CD14-positive monocyte (primary cell): ENCODE measurements at regions of chr20 and their contacts with region 1.

Region 1: GRCh38 chr20:8427419-8428040 is 295.5 kb downstream of the PLCB1 start:
- DNase-seq: peak; percentile 57 to 86 (median 77)
- H3K4me3 ChIP-seq: peak overlapping the region in 1 of 3 experiments; percentile 33
- H3K4me3 Mint-ChIP-seq: peak overlapping the region; percentile 27 to 68
- H3K27ac ChIP-seq: peak overlapping the region; percentile 74 to 83
- H3K27ac Mint-ChIP-seq: peak overlapping the region; percentile 91 to 96 (median 95)
- H3K4me1 ChIP-seq: peaks cover 76 to 88% of the 10 kb centered on the region in 2 donors
- H3K4me1 Mint-ChIP-seq: peaks cover 81% of the 10 kb centered on the region
- H3K27me3 ChIP-seq: no peaks in the 10 kb centered on the region
- H3K27me3 Mint-ChIP-seq: no peaks in the 10 kb centered on the region
- CTCF ChIP-seq: no peak

Region 2: GRCh38 chr20:8244637-8245036 is 182.9 kb before region 1 on chr20:
- intact Hi-C with region 1: no loop called
- DNase-seq: no peak
- H3K4me3 ChIP-seq: no peak overlapping the region
- H3K4me3 Mint-ChIP-seq: no peak overlapping the region
- H3K27ac ChIP-seq: no peak overlapping the region
- H3K27ac Mint-ChIP-seq: no peak overlapping the region
- H3K4me1 ChIP-seq: peaks cover 5 to 23% of the 10 kb centered on the region in 2 donors
- H3K4me1 Mint-ChIP-seq: peaks cover 30% of the 10 kb centered on the region
- H3K27me3 ChIP-seq: no peaks in the 10 kb centered on the region
- H3K27me3 Mint-ChIP-seq: no peaks in the 10 kb centered on the region
- CTCF ChIP-seq: no peak

Region 3: GRCh38 chr20:8389381-8390036 is 38.0 kb before region 1 on chr20:
- intact Hi-C with region 1: loop called in 1 of 2 experiments (anchors 5 kb)
- DNase-seq: peak; percentile 28 to 64 (median 53)
- H3K4me3 ChIP-seq: peak overlapping the region in 1 of 3 experiments; percentile 16
- H3K4me3 Mint-ChIP-seq: no peak overlapping the region
- H3K27ac ChIP-seq: peak overlapping the region in 1 of 2 donors; percentile 63
- H3K27ac Mint-ChIP-seq: peak overlapping the region in 5 of 7 donors; percentile 13 to 62 (median 54)
- H3K4me1 ChIP-seq: peaks cover 40 to 61% of the 10 kb centered on the region in 2 donors
- H3K4me1 Mint-ChIP-seq: peaks cover 57% of the 10 kb centered on the region
- H3K27me3 ChIP-seq: no peaks in the 10 kb centered on the region
- H3K27me3 Mint-ChIP-seq: no peaks in the 10 kb centered on the region
- CTCF ChIP-seq: peak; percentile 79